ENCODE measurements at regions of chr12 and their contacts with region 1.

Region 1: DNA sequence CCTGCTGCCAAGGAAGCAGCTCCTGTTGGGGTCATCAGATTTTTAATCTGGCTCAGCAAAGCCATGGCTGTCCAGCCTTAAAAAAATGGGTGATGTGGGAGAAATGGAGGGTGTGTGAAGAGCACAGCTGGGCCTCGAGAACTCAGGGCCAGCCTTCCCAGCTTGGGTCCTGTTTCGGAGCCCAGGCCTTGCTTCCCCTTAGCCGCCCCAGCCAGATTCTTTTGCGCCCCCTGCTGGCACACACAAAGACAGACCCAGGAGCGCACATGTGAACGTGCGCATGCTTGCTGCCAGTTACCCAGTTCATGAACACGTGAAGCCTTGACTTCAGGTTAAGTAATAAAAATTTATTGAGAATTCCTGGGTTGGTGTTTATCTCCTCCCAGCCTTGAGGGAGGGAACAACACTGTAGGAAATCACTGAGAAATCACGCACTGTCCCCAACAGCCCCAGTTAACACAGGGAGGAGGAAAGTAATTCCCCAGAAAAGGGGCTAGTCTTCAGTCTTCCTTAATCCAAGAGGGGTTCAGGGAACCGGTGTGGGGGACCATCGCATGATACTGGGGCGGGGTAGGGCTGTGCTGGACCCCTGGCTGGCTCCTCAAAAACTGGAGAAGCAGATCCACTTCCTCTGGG is 5.3 kb downstream of the PHB2 start:
- DNase-seq: peak; percentile 68 to 97 (median 84)

Region 2: GRCh38 chr12:6745741-6746525 is 219.2 kb before region 1 on chr12:
- intact Hi-C with region 1: no loop called
- DNase-seq: peak in 1 of 10 donors; percentile 62

Region 3: GRCh38 chr12:6937481-6938297 is 27.5 kb before region 1 on chr12:
- intact Hi-C with region 1: loop called (anchors 2 kb)
- DNase-seq: peak; percentile 89 to 99 (median 92)

Region 4: GRCh38 chr12:6944381-6945186 is 20.6 kb before region 1 on chr12:
- intact Hi-C with region 1: loop called (anchors 1 kb)
- DNase-seq: peak; percentile 87 to 99 (median 93)

Region 5: DNA sequence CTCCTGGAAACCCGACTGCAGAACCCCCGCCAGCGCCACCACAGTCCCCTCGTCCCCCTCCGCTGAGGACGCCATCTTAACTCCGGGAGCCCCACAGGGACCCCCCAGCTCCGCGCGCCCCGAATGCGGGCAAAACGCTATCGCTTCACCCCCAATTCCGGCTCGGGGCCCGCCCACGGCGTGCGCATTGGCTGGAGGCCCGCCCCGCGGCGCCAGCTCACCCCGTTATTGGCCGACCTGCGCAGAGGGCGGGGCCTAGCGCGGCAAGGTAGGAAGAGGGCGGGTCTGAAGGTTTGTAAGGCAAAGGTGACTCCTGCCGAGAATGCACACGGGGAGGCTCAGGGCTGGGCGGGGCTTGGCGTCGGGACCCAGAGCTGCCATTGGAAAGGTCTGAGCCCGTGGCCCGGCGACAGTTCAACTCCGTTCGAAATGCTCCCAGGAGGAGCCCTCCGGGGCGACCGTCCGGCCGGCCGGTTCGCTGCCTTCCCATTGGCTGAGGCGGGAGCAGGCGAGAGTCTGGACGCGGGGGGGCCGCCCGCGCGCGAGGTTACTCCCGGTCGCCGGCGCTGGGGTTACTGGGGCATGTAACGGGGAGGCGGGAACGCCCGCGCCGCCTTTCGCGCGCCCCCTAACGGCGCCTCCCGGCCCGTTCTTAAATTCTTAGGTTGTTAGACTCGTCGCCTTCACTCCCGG is 53.4 kb after region 1 on chr12 and contains the start of gene LPCAT3:
- intact Hi-C with region 1: loop called (anchors 1 kb)
- DNase-seq: peak; percentile 93 to 100 (median 98)

Region 6: DNA sequence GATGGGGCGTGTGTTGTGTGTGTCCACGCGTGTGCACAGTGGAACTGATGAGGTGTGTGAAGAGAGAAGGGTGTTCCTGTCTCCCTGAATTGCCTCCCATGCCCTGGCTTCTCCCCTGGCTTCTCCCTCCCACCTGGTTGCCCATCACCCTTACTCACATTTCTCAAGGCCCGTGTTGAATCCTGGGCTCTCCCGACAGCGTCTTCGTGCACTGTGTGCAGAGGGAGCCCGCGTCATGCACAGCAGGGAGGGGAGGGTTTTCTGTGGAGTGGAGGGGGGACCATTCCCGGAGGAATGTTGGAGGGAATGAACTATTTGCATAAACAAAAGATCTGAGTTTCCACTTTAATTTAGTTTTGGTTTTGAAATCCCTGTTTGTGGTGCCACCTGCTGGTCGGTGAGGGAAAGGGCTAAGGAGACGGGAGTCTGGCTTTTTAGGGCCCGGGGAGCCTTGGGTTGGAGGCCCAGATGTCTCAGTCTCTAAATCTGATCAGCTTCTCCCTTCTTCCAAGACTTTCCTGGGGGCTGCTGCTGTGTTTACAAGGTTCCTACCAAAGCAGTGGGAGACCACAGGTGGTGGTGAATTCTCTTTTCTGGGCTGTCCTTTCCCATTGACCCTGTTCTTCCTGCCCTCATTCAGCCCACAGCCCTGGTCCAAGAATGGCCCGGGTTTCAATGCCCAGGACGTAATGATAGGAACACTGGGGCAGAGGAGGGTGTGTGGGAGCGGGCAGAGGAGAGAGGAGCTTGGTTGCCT is 127.3 kb after region 1 on chr12 and contains the start of gene C1R:
- intact Hi-C with region 1: loop called (anchors 10 kb)
- DNase-seq: peak in 7 of 10 donors; percentile 63 to 92 (median 69)

Measured in posterior cingulate gyrus (tissue), 11 donors.